Activated CD8-positive, alpha-beta memory T cell treated with anti-CD3 and anti-CD28 coated beads, Interleukin-2, amount 10 ng/mL, durations not matched to agents 7 days and 5 days (primary cell): ENCODE measurements at regions of chr19 and their contacts with region 1.

Region 1: GRCh38 chr19:12974301-12975220 is 5.2 kb downstream of the DAND5 start:
- DNase-seq: no peak
- ATAC-seq: no peak
- H3K4me3 Mint-ChIP-seq: no peak overlapping the region
- H3K27ac Mint-ChIP-seq: no peak overlapping the region
- H3K4me1 Mint-ChIP-seq: peaks cover 1% of the 10 kb centered on the region
- H3K27me3 Mint-ChIP-seq: peaks cover 14% of the 10 kb centered on the region

Region 2: GRCh38 chr19:12907166-12907565 is 67.4 kb before region 1 on chr19:
- CTCF ChIA-PET with region 1: no interaction called
- DNase-seq: no peak
- ATAC-seq: no peak
- H3K4me3 Mint-ChIP-seq: no peak overlapping the region
- H3K27ac Mint-ChIP-seq: no peak overlapping the region
- H3K4me1 Mint-ChIP-seq: peaks cover 6% of the 10 kb centered on the region
- H3K27me3 Mint-ChIP-seq: no peaks in the 10 kb centered on the region

Region 3: GRCh38 chr19:13033819-13034611 is 59.5 kb after region 1 on chr19:
- CTCF ChIA-PET with region 1: interaction called, 22 read pairs
- DNase-seq: peak; percentile 63
- ATAC-seq: peak; percentile 73
- H3K4me3 Mint-ChIP-seq: no peak overlapping the region
- H3K27ac Mint-ChIP-seq: no peak overlapping the region
- H3K4me1 Mint-ChIP-seq: peaks cover 16% of the 10 kb centered on the region
- H3K27me3 Mint-ChIP-seq: peaks cover 11% of the 10 kb centered on the region

Region 4: DNA sequence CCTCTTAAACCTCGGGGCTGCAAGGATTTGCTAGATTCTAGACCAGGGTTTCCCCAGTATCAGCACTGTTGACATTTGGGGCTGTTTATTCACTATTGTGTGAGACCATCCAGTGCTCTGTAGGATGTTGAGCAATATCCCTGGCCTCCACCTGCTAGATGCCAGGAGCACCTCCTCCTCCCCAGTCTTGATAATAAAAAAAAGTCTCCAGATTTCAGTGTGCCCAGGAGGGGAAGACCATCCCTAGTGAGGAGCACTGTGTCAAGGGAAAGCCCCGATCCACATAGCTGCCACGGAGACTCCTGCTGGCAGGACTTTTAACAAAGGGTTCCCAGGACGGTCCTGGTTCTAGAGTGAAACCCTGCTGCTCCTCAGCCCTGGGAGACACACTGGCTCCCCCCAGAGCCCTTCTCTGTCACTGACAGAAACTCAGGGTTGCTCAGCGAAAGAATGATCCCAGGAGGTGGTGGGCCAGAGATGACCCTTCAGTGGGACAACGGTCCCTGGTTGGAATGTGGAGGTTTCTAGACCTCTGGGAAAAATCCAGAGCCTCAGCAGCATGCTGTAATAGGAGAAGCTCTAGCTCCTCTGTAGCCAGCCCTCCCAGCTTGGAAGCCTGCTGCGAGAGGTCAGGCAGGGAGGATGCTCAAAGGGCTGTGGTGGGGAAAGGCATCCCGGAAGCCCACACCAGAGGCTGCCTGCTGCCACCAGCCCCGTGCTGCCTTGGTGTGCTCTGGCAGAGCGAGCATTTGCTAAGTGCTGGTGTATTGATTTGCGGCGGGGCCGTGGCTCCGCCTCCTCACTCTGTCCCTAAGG is 107.8 kb after region 1 on chr19:
- CTCF ChIA-PET with region 1: interaction called, 13 read pairs
- DNase-seq: no peak
- ATAC-seq: no peak
- H3K4me3 Mint-ChIP-seq: no peak overlapping the region
- H3K27ac Mint-ChIP-seq: no peak overlapping the region
- H3K4me1 Mint-ChIP-seq: no peaks in the 10 kb centered on the region
- H3K27me3 Mint-ChIP-seq: peaks cover 2% of the 10 kb centered on the region

Region 5: DNA sequence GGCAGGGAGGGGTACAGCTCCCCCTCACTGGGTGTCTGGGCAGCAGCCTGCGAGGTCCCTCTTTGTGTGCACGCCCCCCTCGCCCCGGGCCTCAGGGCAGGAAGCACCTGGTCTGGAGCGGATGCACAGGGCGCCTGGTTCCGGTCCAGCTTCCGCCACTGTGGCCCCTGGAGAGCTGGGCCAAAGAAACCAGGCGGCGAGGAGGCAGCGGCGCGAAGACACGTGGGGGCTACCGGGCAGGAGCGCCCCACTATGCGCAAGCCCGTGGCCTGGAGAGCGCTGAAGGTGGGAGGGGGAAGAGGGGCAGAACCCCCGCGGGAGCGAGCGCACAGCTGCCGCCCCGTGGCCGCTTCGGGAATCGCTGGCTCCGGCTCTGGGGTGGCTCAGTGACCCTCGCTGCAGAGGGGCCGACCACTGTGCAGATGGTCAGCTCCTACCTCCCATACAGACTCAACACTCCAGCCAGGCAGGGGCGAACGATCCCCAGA is 129.8 kb after region 1 on chr19:
- CTCF ChIA-PET with region 1: interaction called, 19 read pairs
- DNase-seq: peak; percentile 72
- ATAC-seq: peak; percentile 38
- H3K4me3 Mint-ChIP-seq: peak overlapping the region; percentile 78
- H3K27ac Mint-ChIP-seq: peak overlapping the region; percentile 83
- H3K4me1 Mint-ChIP-seq: peaks cover 30% of the 10 kb centered on the region
- H3K27me3 Mint-ChIP-seq: peaks cover 5% of the 10 kb centered on the region